PC-9 (cell line): ENCODE measurements at regions of chr2 and their contacts with region 1.

Region 1: GRCh38 chr2:128305159-128306087 is 13.2 kb downstream of the HS6ST1 start:
- DNase-seq: peak; percentile 95 to 96
- H3K4me3 ChIP-seq: no peak overlapping the region
- H3K27ac ChIP-seq: peak overlapping the region; percentile 56
- H3K4me1 ChIP-seq: peaks cover 63% of the 10 kb centered on the region
- H3K27me3 ChIP-seq: no peaks in the 10 kb centered on the region
- CTCF ChIP-seq: no peak; the same call in 1 of the 2 replicates

Region 2: DNA sequence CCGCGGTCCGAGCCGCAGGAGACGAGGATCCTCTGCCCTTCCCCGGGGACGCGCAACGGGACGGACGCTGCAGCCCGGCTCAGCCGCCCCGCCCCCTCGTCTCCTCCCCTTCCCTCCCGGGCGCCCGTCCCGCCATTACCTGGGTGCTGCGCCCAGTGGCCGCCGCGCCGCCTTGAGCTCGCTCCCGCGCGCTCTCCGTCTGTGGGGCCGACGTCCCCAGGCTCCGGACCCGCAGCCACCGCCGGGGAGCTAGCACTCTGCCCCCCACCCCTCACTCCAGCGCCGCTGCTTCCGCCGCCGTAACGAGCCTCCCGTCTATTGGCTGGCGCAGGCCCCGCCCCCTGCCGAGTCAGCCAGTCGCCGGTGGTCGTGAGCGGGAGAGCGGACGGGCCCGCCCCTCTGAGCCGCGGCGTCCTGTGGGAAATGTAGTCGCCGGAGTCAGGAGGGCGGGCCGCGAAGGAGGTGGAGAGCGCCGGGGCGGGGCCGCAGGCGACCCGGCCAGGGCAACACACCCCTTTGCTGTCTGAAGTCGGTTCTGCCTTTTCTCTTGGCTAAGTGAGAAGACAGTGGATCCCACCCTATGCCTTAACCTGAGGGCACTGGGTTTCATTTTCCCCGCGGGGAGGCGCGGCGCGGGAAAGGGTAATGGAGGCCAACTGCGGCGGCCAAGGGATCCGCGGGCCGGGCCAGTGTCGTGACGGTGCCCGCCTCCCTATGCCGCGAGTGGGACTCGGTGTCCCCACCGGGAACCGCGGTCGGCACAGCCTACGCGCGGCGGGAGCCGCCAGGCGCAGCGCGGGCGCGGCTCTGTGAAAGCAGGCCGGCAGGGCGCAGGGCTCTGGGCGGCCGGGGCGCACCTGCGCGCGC is 277.4 kb before region 1 on chr2 and contains the start of gene SAP130:
- CTCF ChIA-PET with region 1: no interaction called
- POLR2A ChIA-PET with region 1: no interaction called
- intact Hi-C with region 1: loop called (anchors 5 kb)
- DNase-seq: peak; percentile 91 to 99
- H3K4me3 ChIP-seq: peak within 1 kb of the TSS; percentile 98
- H3K27ac ChIP-seq: peak within 1 kb of the TSS; percentile 28; the same call in 1 of the 2 replicates
- H3K4me1 ChIP-seq: peaks cover 17% of the 10 kb centered on the region
- H3K27me3 ChIP-seq: no peaks in the 10 kb centered on the region
- CTCF ChIP-seq: no peak
- total RNA-seq, gene SAP130: 27.2 and 33.9 TPM in 2 replicates

Region 3: GRCh38 chr2:128178650-128179460 is 126.6 kb before region 1 on chr2:
- CTCF ChIA-PET with region 1: interaction called, 3 read pairs
- POLR2A ChIA-PET with region 1: interaction called, 4 read pairs
- intact Hi-C with region 1: loop called (anchors 1 kb)
- DNase-seq: peak; percentile 44 to 52
- H3K4me3 ChIP-seq: no peak overlapping the region
- H3K27ac ChIP-seq: no peak overlapping the region
- H3K4me1 ChIP-seq: no peaks in the 10 kb centered on the region
- H3K27me3 ChIP-seq: no peaks in the 10 kb centered on the region
- CTCF ChIP-seq: peak; percentile 92

Region 4: DNA sequence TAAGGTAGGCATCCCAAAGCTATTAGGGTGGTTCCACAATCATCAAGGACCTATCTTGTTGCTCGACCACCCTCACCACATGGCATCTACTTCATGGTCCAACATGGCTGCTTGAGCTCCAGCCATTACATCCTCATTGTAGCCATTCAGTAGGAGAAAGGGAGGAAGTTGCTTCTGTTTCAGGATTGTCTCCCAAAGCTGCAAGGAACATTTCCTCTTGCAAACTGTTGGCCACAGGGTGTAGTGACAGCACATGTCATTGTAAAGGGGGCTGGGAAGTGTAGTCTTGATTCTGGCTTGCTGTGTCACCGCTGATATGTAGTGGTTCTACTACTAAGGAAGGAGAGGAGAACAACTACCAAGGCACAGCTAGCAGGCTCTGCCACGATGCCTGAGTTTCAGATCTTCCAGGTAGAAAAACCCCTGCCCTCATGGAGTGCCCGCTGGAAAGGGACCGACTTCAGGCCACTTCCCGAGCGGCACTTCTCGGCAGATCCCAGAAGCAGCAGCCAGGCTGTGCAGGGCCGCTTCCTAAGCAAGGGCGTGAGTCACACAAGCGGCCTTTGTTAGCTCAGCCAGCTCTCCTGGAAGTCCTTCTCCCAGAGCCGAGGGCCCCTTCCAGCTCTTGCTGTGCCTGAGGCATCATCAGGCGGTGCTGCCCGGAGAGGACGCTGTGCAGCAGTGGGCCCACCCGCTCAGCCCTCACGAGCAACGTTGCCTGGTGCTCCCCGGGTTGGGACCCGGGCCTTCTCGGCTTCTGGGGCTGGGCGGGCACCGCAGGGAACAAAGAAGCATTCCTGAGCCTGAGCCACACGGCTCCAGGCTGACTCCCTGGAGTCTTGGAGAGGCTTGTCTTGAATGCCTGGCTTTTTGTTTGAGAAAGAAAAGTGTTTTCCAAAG is 44.9 kb before region 1 on chr2:
- CTCF ChIA-PET with region 1: interaction called, 3 read pairs
- POLR2A ChIA-PET with region 1: no interaction called
- intact Hi-C with region 1: loop called (anchors 2 kb)
- DNase-seq: peak; percentile 73 to 74
- H3K4me3 ChIP-seq: peak overlapping the region; percentile 7; the same call in 1 of the 2 replicates
- H3K27ac ChIP-seq: no peak overlapping the region
- H3K4me1 ChIP-seq: no peaks in the 10 kb centered on the region
- H3K27me3 ChIP-seq: no peaks in the 10 kb centered on the region
- CTCF ChIP-seq: no peak